ENCODE measurements at regions of chr12 and their contacts with region 1.

Region 1: DNA sequence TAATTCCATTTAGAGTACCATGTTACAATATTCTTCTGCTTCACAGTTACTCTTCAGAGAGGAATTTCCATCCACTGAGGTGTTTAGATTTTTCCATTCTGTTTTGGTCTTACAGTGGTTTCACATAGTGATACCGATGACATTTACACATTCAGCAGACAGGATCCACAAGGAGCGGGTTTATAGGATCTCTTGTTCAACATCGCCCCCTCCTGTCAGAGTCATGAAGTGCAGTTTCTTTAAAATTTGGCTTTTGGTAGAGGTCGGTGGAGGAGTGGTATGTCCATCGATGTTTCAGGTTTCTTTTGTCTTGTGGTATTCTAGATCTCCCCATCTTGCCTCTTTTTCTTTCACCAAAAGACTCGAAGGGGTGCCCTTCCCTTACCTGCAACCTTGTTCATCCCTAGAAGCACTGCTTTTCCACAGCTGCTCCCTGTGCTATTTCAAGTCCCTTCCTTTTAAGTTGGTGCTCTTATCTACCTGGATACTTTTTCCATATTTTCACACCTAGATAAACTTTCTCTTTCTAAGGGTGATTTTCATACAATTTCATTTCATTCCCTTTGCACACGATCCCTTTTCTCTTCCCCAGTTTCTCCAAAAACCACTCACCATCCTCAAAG is 181.3 kb downstream of the ITPR2 start:
- DNase-seq: no peak
- ATAC-seq: peak; percentile 62
- H3K4me3 Mint-ChIP-seq: no peak overlapping the region
- H3K27ac Mint-ChIP-seq: no peak overlapping the region
- H3K4me1 Mint-ChIP-seq: no peaks in the 10 kb centered on the region
- H3K27me3 Mint-ChIP-seq: no peaks in the 10 kb centered on the region
- CTCF ChIP-seq: no peak

Region 2: DNA sequence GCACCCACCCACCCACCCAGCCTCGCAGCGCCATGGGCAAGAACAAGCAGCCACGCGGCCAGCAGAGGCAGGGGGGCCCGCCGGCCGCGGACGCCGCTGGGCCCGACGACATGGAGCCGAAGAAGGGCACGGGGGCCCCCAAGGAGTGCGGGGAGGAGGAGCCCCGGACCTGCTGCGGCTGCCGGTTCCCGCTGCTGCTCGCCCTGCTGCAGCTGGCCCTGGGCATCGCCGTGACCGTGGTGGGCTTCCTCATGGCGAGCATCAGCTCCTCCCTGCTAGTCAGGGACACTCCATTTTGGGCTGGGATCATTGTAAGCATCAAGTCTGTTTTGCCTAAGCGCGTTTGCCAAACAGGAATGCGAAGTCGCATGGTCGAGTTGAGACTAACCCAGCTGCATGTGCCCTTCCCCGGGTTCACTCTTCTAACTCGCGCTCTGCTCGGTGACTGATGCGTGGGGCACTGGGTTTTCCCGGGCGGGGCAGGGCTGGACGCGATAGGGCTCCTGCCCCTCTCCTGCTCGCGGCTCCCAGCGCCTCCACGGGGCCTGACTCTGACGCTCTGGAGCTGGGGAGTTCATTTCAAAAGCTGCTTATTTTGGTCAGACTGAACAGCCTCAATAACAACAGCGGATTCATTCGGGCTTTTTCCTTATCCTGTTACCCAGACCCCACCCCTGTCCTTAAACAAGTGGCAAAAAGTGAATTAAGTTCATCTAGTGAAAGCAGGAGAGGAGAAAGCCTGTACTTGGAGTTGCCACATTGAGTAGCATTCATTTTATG is 455.8 kb before region 1 on chr12:
- CTCF ChIA-PET with region 1: no interaction called
- POLR2A ChIA-PET with region 1: no interaction called
- intact Hi-C with region 1: loop called (anchors 5 kb)
- DNase-seq: peak; percentile 46
- ATAC-seq: peak; percentile 82
- H3K4me3 Mint-ChIP-seq: peak overlapping the region; percentile 94
- H3K27ac Mint-ChIP-seq: peak overlapping the region; percentile 87
- H3K4me1 Mint-ChIP-seq: peaks cover 13% of the 10 kb centered on the region
- H3K27me3 Mint-ChIP-seq: no peaks in the 10 kb centered on the region
- CTCF ChIP-seq: no peak